Esophagus squamous epithelium (tissue), 5 donors: ENCODE measurements at regions of chr3 and their contacts with region 1.

Region 1: GRCh38 chr3:124688581-124689454 is 41.4 kb upstream of the UMPS start:
- DNase-seq: no peak
- H3K4me3 ChIP-seq: no peak overlapping the region
- H3K27ac ChIP-seq: no peak overlapping the region
- H3K4me1 ChIP-seq: peaks cover 7 to 25% (median 7%) of the 10 kb centered on the region in 3 donors
- H3K27me3 ChIP-seq: no peaks in the 10 kb centered on the region
- CTCF ChIP-seq: peak; percentile 51 to 89 (median 86)
- POLR2A ChIP-seq: no peak

Region 2: DNA sequence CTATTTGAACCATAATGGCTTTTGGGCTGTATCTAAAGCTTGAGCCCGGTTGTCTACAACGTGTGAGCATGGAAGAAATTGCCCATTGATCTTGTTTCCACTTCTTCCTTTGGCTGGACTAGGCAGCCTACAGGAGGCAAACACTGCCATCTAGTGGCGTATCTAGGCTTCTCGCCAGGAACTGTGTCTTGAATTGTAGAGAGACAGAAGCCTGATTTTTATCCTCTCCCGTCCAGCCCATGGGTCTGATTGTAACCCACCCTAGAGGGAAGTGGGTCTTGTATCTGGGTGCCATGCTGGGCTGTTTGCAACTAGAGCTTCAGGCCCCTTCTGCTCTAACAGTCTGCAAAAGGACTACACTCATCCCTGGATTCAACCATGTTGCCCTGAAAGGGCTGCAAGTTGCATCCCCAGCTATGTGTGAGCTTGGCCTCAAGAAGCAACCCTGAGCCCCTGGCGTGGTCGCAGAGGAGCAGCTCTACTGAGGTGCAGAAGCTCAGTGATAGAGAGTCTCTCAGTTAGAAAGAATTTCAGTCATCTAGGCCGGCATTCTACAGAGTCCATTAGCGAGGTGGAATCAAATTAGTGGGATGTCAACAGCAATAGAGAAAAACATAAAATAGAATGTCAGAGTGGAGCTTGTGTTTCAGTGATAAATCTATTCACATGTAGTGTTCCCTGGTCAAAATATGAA is 128.8 kb before region 1 on chr3:
- intact Hi-C with region 1: loop called (anchors 2 kb)
- DNase-seq: no peak
- H3K4me3 ChIP-seq: no peak overlapping the region
- H3K27ac ChIP-seq: peak overlapping the region in 3 of 4 donors; percentile 63 to 74 (median 69)
- H3K4me1 ChIP-seq: peaks cover 17 to 50% (median 26%) of the 10 kb centered on the region in 3 donors
- H3K27me3 ChIP-seq: peaks cover 0 to 68% (median 0%) of the 10 kb centered on the region in 4 donors
- CTCF ChIP-seq: peak; percentile 55 to 83 (median 78)
- POLR2A ChIP-seq: no peak

Region 3: DNA sequence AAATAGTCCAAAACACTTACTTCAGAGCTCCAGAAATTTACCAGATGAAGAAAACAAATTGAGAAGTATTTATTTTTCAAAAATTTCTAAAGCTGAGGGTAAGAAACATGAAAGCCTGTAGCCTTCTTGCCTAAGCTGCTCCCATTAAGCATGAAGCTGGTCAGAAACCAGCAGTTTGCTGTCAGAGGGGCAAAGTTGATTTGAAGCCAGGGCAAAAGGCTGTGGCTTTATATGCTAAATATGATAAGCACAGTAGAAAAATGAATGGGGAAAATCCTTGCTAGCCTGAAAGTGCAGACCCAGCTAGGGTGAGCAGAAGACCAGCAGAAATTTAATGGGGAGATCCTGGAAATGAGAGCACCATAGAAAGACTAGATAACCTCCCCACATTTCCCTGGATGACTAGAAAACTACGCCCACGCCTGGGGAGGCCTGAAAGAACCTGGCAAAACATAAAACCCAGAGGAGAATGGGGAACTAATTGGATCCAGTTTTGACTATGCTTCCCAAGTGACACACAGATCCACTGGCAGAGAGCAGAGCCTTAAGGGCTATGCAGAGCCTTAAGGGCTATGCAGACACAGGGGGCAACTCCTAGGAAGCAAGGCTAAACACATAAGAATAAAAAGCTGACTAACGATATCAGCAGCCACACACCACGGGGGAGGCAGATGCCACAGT is 409.9 kb after region 1 on chr3:
- intact Hi-C with region 1: no loop called
- DNase-seq: no peak
- H3K4me3 ChIP-seq: no peak overlapping the region
- H3K27ac ChIP-seq: no peak overlapping the region
- H3K4me1 ChIP-seq: peaks cover 0 to 5% (median 0%) of the 10 kb centered on the region in 3 donors
- H3K27me3 ChIP-seq: no peaks in the 10 kb centered on the region
- CTCF ChIP-seq: no peak
- POLR2A ChIP-seq: no peak